Esophagus squamous epithelium (tissue), 5 donors: ENCODE measurements at regions of chr9 and their contacts with region 1.

Region 1: DNA sequence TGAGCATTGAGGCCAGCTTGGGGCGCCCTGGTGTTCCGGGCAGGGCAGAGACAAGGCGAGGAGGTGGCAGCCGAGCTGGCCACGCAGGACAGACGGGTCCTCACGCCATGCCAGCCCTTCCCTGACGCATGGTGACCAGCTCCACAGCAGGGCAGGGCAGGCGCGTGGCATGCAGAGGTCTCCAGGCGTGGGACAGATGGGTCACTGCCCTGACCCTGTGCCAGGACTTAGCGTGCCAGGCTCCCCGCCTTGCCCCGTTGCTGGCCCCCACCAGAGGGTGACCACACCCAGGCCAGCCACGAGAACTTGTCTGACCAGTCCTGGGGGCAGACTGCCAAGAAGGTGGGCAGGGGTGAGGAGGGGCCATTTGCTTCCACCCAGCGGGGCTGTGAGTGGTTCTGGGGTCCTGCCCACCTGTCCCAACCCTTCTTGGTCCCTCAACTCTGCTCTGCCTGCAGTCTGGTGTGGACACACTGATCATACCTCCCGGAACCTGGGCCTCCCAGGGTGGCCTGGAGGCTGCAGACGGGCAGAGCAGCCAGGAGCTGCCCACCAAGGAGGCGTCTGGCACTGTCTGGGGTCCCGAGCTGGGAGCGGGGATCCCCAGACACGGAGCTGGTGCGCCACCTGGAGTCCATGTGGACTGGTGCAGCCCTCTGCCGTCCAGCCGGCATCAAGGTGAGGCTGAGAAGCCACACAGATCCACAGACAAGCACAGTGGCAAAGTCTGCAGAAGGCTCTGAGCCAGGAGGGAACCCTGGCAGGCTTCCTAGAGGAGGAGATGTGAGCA is at the start of gene RNF224:
- DNase-seq: no peak
- H3K4me3 ChIP-seq: peak within 1 kb of the TSS; percentile 32 to 62 (median 53)
- H3K27ac ChIP-seq: peak within 1 kb of the TSS; percentile 92 to 97 (median 96)
- H3K4me1 ChIP-seq: peaks cover 34 to 59% (median 40%) of the 10 kb centered on the region in 3 donors
- H3K27me3 ChIP-seq: peaks cover 0 to 53% (median 0%) of the 10 kb centered on the region in 4 donors
- CTCF ChIP-seq: peak; percentile 80 to 96 (median 92)
- POLR2A ChIP-seq: no peak
- total RNA-seq, gene RNF224: 1.2 to 5.2 (median 3.0) TPM

Region 2: GRCh38 chr9:137114610-137115391 is 112.5 kb before region 1 on chr9 and contains the start of gene DPP7:
- intact Hi-C with region 1: loop called (anchors 5 kb)
- DNase-seq: no peak
- H3K4me3 ChIP-seq: peak within 1 kb of the TSS; percentile 57 to 94 (median 73)
- H3K27ac ChIP-seq: peak within 1 kb of the TSS; percentile 44 to 76 (median 52)
- H3K4me1 ChIP-seq: peaks cover 14 to 20% (median 15%) of the 10 kb centered on the region in 3 donors
- H3K27me3 ChIP-seq: peaks cover 0 to 17% (median 0%) of the 10 kb centered on the region in 4 donors
- CTCF ChIP-seq: peak in 2 of 6 experiments; percentile 10 to 23
- POLR2A ChIP-seq: peak in 2 of 4 donors; percentile 40 to 41
- total RNA-seq, gene DPP7: 41.1 to 109 (median 62.4) TPM

Region 3: DNA sequence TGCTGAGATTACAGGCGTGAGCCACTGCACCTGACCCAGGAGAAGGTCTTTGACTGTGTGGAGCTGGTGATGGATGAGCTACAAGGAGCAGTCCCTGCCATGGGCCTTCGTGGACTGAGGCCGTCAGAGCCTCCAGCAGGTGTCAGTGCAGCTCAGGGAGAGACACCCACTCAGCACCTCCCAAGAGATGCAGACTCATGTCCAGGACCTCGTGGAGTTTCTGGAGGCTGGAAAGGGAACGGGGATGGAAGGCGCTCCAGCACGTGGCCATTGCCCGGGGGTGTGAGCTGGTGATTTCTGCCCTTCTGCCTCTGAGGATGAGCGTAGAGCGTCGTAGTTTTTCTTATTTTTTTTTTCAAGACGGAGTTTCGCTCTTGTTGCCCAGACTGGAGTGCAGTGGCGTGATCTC is 59.7 kb after region 1 on chr9:
- intact Hi-C with region 1: no loop called
- DNase-seq: no peak
- H3K4me3 ChIP-seq: no peak overlapping the region
- H3K27ac ChIP-seq: no peak overlapping the region
- H3K4me1 ChIP-seq: no peaks in the 10 kb centered on the region
- H3K27me3 ChIP-seq: peaks cover 0 to 2% (median 0%) of the 10 kb centered on the region in 4 donors
- CTCF ChIP-seq: peak in 5 of 6 experiments; percentile 44 to 78 (median 61)
- POLR2A ChIP-seq: no peak